Colonic mucosa (tissue), 4 donors: ENCODE measurements at regions of chr10 and their contacts with region 1.

Region 1: GRCh38 chr10:53601260-53601875 is 828.8 kb upstream of the MBL2 start:
- DNase-seq: no peak
- H3K4me3 ChIP-seq: no peak overlapping the region
- H3K27ac ChIP-seq: no peak overlapping the region
- H3K4me1 ChIP-seq: no peaks in the 10 kb centered on the region
- H3K27me3 ChIP-seq: no peaks in the 10 kb centered on the region
- CTCF ChIP-seq: peak; percentile 76

Region 2: GRCh38 chr10:52895059-52895458 is 706.3 kb before region 1 on chr10:
- intact Hi-C with region 1: loop called (anchors 10 kb)
- DNase-seq: no peak
- H3K4me3 ChIP-seq: no peak overlapping the region
- H3K27ac ChIP-seq: no peak overlapping the region
- H3K4me1 ChIP-seq: no peaks in the 10 kb centered on the region
- H3K27me3 ChIP-seq: no peaks in the 10 kb centered on the region
- CTCF ChIP-seq: no peak

Region 3: GRCh38 chr10:53487019-53487983 is 114.1 kb before region 1 on chr10:
- intact Hi-C with region 1: no loop called
- DNase-seq: no peak
- H3K4me3 ChIP-seq: no peak overlapping the region
- H3K27ac ChIP-seq: no peak overlapping the region
- H3K4me1 ChIP-seq: no peaks in the 10 kb centered on the region
- H3K27me3 ChIP-seq: no peaks in the 10 kb centered on the region
- CTCF ChIP-seq: no peak

Region 4: DNA sequence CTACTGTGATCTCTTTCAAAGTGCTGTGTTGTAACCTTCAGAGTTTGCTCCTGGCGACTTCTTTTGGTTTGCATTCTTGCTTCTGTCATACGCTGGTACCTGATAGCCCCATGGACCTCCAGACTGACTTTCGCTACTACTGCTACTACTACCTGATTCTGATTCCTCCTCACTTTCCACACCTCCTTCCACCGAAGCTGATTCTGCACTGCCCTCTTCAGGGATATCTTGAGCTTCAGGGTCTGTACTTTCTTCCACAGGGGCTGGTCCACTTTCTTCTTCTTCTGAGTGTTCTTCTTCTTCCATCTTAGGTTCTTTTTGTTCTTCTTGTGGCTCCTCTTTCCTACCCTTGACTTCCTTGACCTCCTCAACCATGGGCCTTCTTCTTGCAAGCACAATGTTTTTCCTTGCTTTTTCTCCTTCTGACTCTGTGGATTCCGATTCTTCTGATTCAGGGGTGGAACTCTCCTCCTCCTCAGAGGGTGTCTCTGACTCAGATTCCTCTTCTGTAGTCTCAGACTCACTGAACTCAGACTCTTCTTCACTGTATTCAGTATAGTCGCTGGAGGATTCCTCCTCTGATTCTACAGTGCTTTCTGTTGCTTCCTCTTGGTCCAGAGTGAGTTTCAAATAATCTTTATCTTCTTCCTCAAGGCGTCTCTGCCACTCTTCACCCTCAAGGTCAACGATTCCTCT is 207.5 kb after region 1 on chr10:
- intact Hi-C with region 1: loop called (anchors 10 kb)
- DNase-seq: no peak
- H3K4me3 ChIP-seq: no peak overlapping the region
- H3K27ac ChIP-seq: no peak overlapping the region
- H3K4me1 ChIP-seq: no peaks in the 10 kb centered on the region
- H3K27me3 ChIP-seq: no peaks in the 10 kb centered on the region
- CTCF ChIP-seq: no peak

Region 5: GRCh38 chr10:54402576-54402975 is 801.2 kb after region 1 on chr10:
- intact Hi-C with region 1: loop called (anchors 10 kb)
- DNase-seq: no peak
- H3K4me3 ChIP-seq: no peak overlapping the region
- H3K27ac ChIP-seq: no peak overlapping the region
- H3K4me1 ChIP-seq: no peaks in the 10 kb centered on the region
- H3K27me3 ChIP-seq: no peaks in the 10 kb centered on the region
- CTCF ChIP-seq: no peak